CD4-positive, alpha-beta T cell (primary cell): ENCODE measurements at regions of chr7 and their contacts with region 1.

Region 1: DNA sequence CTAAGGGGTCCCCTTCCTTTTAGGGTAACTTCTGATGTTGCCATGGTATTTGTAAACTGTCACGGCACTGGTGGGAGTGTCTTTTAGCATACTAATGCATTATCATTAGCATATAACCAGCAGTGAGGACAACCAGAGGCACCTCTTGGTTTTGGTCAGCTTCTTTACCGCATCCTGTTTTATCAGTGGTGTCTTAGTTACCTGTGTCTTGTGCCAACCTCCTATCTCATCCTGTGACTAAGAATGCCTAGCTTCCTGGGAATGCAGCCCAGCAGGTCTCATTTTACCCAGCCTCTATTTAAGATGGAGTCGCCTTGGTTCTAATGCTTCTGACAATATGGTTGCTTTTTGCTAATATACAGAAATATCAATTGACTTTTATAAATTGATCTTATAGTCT is 54.9 kb downstream of the AHCYL2 start:
- DNase-seq: no peak
- ATAC-seq: no peak
- H3K4me3 ChIP-seq: no peak overlapping the region
- H3K4me3 Mint-ChIP-seq: no peak overlapping the region
- H3K27ac ChIP-seq: no peak overlapping the region
- H3K27ac Mint-ChIP-seq: no peak overlapping the region
- H3K4me1 ChIP-seq: no peaks in the 10 kb centered on the region
- H3K4me1 Mint-ChIP-seq: no peaks in the 10 kb centered on the region
- H3K27me3 ChIP-seq: no peaks in the 10 kb centered on the region
- H3K27me3 Mint-ChIP-seq: no peaks in the 10 kb centered on the region
- CTCF ChIP-seq: no peak

Region 2: GRCh38 chr7:129258649-129259389 is 20.9 kb before region 1 on chr7:
- CTCF ChIA-PET with region 1: no interaction called
- POLR2A ChIA-PET with region 1: no interaction called
- intact Hi-C with region 1: loop called in 1 of 2 experiments (anchors 2 kb)
- DNase-seq: peak in 2 of 14 experiments; percentile 12 to 23
- ATAC-seq: peak; percentile 52
- H3K4me3 ChIP-seq: peak overlapping the region; percentile 11
- H3K4me3 Mint-ChIP-seq: peak overlapping the region; percentile 72
- H3K27ac ChIP-seq: no peak overlapping the region
- H3K27ac Mint-ChIP-seq: peak overlapping the region; percentile 44
- H3K4me1 ChIP-seq: peaks cover 14% of the 10 kb centered on the region
- H3K4me1 Mint-ChIP-seq: peaks cover 61% of the 10 kb centered on the region
- H3K27me3 ChIP-seq: no peaks in the 10 kb centered on the region
- H3K27me3 Mint-ChIP-seq: no peaks in the 10 kb centered on the region
- CTCF ChIP-seq: no peak

Region 3: DNA sequence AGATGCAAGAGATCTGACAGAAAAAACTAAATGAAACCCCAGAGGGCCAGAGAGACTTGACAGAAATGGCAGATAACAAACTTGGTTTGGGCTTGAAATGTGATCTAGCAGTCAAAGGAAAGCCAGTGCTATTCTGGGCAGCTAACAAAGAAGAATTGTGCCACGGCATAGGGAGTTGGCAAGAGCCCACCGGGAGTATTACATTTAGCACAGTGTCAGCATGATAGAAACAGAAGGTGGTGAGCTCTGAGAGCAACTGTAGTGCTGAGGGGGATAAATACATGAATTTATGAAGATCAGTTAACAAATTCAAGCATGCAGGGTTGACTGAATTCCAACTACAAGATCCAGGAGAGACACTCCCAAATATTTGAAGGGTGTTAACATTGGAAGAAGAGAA is 36.2 kb after region 1 on chr7:
- CTCF ChIA-PET with region 1: no interaction called
- POLR2A ChIA-PET with region 1: no interaction called
- intact Hi-C with region 1: loop called in 1 of 2 experiments (anchors 1 kb)
- DNase-seq: no peak
- ATAC-seq: no peak
- H3K4me3 ChIP-seq: no peak overlapping the region
- H3K4me3 Mint-ChIP-seq: no peak overlapping the region
- H3K27ac ChIP-seq: no peak overlapping the region
- H3K27ac Mint-ChIP-seq: no peak overlapping the region
- H3K4me1 ChIP-seq: no peaks in the 10 kb centered on the region
- H3K4me1 Mint-ChIP-seq: peaks cover 7% of the 10 kb centered on the region
- H3K27me3 ChIP-seq: no peaks in the 10 kb centered on the region
- H3K27me3 Mint-ChIP-seq: no peaks in the 10 kb centered on the region
- CTCF ChIP-seq: no peak